Transverse colon (tissue), 4 donors: ENCODE measurements at regions of chr19 and their contacts with region 1.

Region 1: GRCh38 chr19:33921165-33921564 is 124.5 kb downstream of the KCTD15 start:
- DNase-seq: no peak
- H3K4me3 ChIP-seq: no peak overlapping the region
- H3K27ac ChIP-seq: no peak overlapping the region
- H3K4me1 ChIP-seq: no peaks in the 10 kb centered on the region
- H3K27me3 ChIP-seq: peaks cover 3% of the 10 kb centered on the region
- CTCF ChIP-seq: no peak
- EP300 ChIP-seq: no peak
- POLR2A ChIP-seq: no peak

Region 2: DNA sequence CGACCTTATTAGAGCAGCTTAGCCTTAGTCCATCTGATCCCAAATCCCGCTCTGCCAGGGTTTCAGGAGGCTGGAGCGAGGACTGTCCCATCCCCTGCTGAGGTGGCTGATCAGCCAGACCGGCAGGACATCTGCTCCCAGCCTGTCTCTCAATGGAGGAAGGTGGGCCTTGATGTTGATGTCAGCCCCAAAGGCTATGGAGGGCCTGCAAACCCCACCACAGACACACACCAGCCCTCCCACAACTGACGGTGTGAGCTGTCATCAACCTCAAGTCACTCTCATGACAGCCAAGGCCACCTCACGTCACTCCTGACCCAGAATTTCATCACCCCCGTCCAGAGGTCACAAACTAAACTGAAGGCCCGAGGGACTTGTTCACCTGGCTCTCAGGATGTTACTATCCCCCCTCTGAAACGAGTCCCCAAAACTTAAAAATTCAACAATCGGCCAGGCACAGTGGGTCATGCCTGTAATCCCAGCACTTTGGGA is 882.0 kb before region 1 on chr19:
- in situ Hi-C with region 1: no loop called
- intact Hi-C with region 1: loop called (anchors 5 kb)
- DNase-seq: no peak
- H3K4me3 ChIP-seq: no peak overlapping the region
- H3K27ac ChIP-seq: peak overlapping the region in 3 of 4 donors; percentile 85 to 87 (median 87)
- H3K4me1 ChIP-seq: peaks cover 7 to 39% (median 29%) of the 10 kb centered on the region in 4 donors
- H3K27me3 ChIP-seq: no peaks in the 10 kb centered on the region
- CTCF ChIP-seq: no peak
- EP300 ChIP-seq: no peak
- POLR2A ChIP-seq: no peak

Region 3: GRCh38 chr19:33758541-33759013 is 162.6 kb before region 1 on chr19:
- in situ Hi-C with region 1: no loop called
- intact Hi-C with region 1: no loop called
- DNase-seq: no peak
- H3K4me3 ChIP-seq: no peak overlapping the region
- H3K27ac ChIP-seq: no peak overlapping the region
- H3K4me1 ChIP-seq: no peaks in the 10 kb centered on the region
- H3K27me3 ChIP-seq: no peaks in the 10 kb centered on the region
- CTCF ChIP-seq: no peak
- EP300 ChIP-seq: no peak
- POLR2A ChIP-seq: no peak